Caco-2 (cell line): ENCODE measurements at regions of chr20 and their contacts with region 1.

Region 1: GRCh38 chr20:10434832-10435812 is at the start of gene SLX4IP:
- DNase-seq: peak; percentile 94 to 97
- H3K4me3 ChIP-seq: peak within 1 kb of the TSS; percentile 98
- H3K4me3 Mint-ChIP-seq: peak within 1 kb of the TSS; percentile 99
- H3K27ac Mint-ChIP-seq: peak within 1 kb of the TSS; percentile 97
- H3K4me1 ChIP-seq: peaks cover 3% of the 10 kb centered on the region; the same call in 1 of the 2 replicates
- H3K4me1 Mint-ChIP-seq: peaks cover 10% of the 10 kb centered on the region
- H3K27me3 ChIP-seq: no peaks in the 10 kb centered on the region
- H3K27me3 Mint-ChIP-seq: no peaks in the 10 kb centered on the region
- CTCF ChIP-seq: no peak
- total RNA-seq, gene SLX4IP: 8.5 and 8.8 TPM in 2 replicates

Region 2: GRCh38 chr20:10034717-10035571 is 400.2 kb before region 1 on chr20 and contains the start of gene ANKEF1:
- CTCF ChIA-PET with region 1: no interaction called
- POLR2A ChIA-PET with region 1: no interaction called
- intact Hi-C with region 1: loop called (anchors 10 kb)
- DNase-seq: peak; percentile 90 to 94
- H3K4me3 ChIP-seq: peak within 1 kb of the TSS; percentile 72
- H3K4me3 Mint-ChIP-seq: peak within 1 kb of the TSS; percentile 71
- H3K27ac Mint-ChIP-seq: no peak within 1 kb of the TSS
- H3K4me1 ChIP-seq: peaks cover 12% of the 10 kb centered on the region
- H3K4me1 Mint-ChIP-seq: no peaks in the 10 kb centered on the region
- H3K27me3 ChIP-seq: no peaks in the 10 kb centered on the region
- H3K27me3 Mint-ChIP-seq: peaks cover 2% of the 10 kb centered on the region
- CTCF ChIP-seq: no peak
- total RNA-seq, gene ANKEF1: 3.7 and 3.9 TPM in 2 replicates

Region 3: DNA sequence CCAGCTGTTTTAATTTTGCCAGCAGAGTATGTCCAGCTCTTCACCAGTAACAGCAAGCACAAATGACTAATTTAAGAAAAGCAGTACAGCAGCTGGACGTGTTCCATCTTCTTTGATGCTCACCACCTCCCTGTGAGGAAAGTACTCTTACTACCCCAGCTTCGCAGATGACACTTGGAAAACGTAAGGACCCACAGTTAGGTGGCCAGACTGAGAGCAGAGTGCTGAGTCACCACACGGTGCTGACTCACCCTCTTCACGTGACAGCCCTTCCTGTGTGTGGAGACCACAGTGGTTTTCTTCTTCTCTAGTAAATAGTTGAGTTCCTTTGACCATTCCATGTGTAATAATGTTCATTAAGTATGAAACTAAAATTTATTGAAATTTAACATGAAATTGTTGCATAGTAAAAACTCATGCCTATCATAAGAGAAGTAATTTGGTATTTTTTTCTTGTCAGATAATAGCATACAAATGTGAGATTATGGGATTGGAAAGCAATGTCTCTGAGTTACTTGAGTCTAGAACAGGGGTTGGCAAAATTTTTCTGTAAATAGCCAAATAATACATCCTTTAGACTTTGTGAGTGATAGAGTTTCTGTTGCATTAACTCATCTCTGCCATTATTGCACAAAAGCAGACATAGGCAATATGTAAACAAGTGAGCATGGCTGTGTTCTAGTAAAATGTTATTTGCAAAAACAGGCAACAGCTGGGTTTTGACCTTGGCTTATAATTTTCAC is 76.6 kb after region 1 on chr20:
- CTCF ChIA-PET with region 1: interaction called, 3 read pairs
- POLR2A ChIA-PET with region 1: no interaction called
- intact Hi-C with region 1: loop called (anchors 1 kb)
- DNase-seq: peak; percentile 59 to 75
- H3K4me3 ChIP-seq: no peak overlapping the region
- H3K4me3 Mint-ChIP-seq: peak overlapping the region; percentile 54
- H3K27ac Mint-ChIP-seq: peak overlapping the region; percentile 74
- H3K4me1 ChIP-seq: peaks cover 13% of the 10 kb centered on the region
- H3K4me1 Mint-ChIP-seq: peaks cover 9% of the 10 kb centered on the region
- H3K27me3 ChIP-seq: no peaks in the 10 kb centered on the region
- H3K27me3 Mint-ChIP-seq: no peaks in the 10 kb centered on the region
- CTCF ChIP-seq: no peak

Region 4: DNA sequence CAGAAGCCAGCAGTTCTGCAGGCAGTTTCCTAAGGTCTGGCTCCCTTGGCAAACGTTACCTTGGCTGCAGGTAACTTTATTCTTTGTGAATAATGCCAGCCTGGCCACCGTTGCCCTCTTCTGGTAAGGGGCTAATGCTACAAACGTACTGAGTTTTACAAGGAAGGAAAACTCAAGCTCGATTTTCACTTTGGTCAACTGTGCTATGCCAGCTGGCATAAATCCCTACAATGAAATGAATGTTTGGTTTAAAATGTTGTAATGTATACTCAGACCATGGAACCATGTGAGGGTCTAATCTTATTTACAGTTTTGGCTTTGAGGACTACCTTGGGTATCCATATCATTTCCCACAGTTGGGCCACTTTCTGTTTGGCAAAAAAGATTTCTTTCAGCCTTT is 101.4 kb after region 1 on chr20:
- CTCF ChIA-PET with region 1: no interaction called
- POLR2A ChIA-PET with region 1: interaction called, 3 read pairs
- intact Hi-C with region 1: loop called (anchors 1 kb)
- DNase-seq: peak; percentile 46 to 60
- H3K4me3 ChIP-seq: no peak overlapping the region
- H3K4me3 Mint-ChIP-seq: no peak overlapping the region
- H3K27ac Mint-ChIP-seq: no peak overlapping the region
- H3K4me1 ChIP-seq: peaks cover 17% of the 10 kb centered on the region
- H3K4me1 Mint-ChIP-seq: peaks cover 14% of the 10 kb centered on the region
- H3K27me3 ChIP-seq: no peaks in the 10 kb centered on the region
- H3K27me3 Mint-ChIP-seq: no peaks in the 10 kb centered on the region
- CTCF ChIP-seq: peak; percentile 56 to 76

Region 5: DNA sequence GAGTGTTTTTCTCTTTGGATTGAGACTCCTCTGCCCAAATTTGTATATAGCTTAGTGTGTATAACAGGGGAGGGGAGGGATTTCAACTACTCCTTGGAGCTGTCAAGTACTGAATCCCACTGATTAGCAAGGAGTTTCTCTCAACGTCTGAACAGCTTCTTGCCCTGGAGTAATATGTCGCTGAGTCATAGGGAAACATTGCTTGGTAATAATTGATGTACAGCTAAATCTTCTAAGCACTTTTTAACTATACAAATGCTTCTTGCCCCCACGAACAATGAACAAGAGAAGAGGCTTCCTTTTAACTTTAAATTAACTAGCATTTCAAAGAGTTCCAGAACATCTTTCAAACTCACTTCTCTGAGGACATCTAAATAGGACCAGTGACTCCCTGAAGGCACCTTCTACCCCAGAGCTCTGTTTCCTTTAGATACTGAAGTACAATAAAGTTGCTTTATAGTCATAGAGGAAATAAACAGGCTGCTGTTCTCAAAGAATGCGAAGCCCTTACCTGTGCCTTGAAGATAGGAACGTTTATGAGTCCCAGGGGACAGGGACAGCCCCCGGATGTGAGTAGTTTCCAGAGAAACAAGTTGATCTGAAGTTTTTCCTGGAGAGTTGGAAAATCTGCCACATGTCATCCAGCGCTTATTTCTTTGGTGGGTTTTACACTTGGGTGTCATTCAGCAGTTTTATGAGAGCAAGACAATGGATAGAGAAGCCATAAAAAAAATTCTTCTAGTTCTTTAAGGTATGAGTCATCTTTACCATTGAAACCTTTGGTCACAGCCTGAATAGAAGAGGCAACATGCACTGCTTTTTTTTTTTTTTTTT is 1020.1 kb after region 1 on chr20:
- CTCF ChIA-PET with region 1: no interaction called
- POLR2A ChIA-PET with region 1: no interaction called
- intact Hi-C with region 1: loop called (anchors 2 kb)
- DNase-seq: peak; percentile 82 to 92
- H3K4me3 ChIP-seq: peak overlapping the region; percentile 23
- H3K4me3 Mint-ChIP-seq: peak overlapping the region; percentile 73
- H3K27ac Mint-ChIP-seq: peak overlapping the region; percentile 92
- H3K4me1 ChIP-seq: peaks cover 69% of the 10 kb centered on the region
- H3K4me1 Mint-ChIP-seq: peaks cover 63% of the 10 kb centered on the region
- H3K27me3 ChIP-seq: no peaks in the 10 kb centered on the region
- H3K27me3 Mint-ChIP-seq: no peaks in the 10 kb centered on the region
- CTCF ChIP-seq: no peak